ENCODE measurements at regions of chr17 and their contacts with region 1.

Region 1: GRCh38 chr17:40480501-40481003 is 20.9 kb downstream of the TNS4 start:
- DNase-seq: peak; percentile 71 to 96 (median 83)
- ATAC-seq: peak; percentile 87
- H3K4me3 ChIP-seq: no peak overlapping the region
- H3K4me3 Mint-ChIP-seq: peak overlapping the region; percentile 68
- H3K27ac ChIP-seq: peak overlapping the region; percentile 57 to 71
- H3K27ac Mint-ChIP-seq: peak overlapping the region; percentile 97
- H3K4me1 ChIP-seq: peaks cover 80% of the 10 kb centered on the region
- H3K4me1 Mint-ChIP-seq: peaks cover 67% of the 10 kb centered on the region
- H3K27me3 ChIP-seq: no peaks in the 10 kb centered on the region
- H3K27me3 Mint-ChIP-seq: no peaks in the 10 kb centered on the region
- CTCF ChIP-seq: no peak

Region 2: GRCh38 chr17:40279407-40279806 is 201.1 kb before region 1 on chr17:
- CTCF ChIA-PET with region 1: no interaction called
- POLR2A ChIA-PET with region 1: no interaction called
- intact Hi-C with region 1: no loop called
- DNase-seq: no peak
- ATAC-seq: no peak
- H3K4me3 ChIP-seq: no peak overlapping the region
- H3K4me3 Mint-ChIP-seq: no peak overlapping the region
- H3K27ac ChIP-seq: no peak overlapping the region
- H3K27ac Mint-ChIP-seq: no peak overlapping the region
- H3K4me1 ChIP-seq: peaks cover 10% of the 10 kb centered on the region
- H3K4me1 Mint-ChIP-seq: peaks cover 11% of the 10 kb centered on the region
- H3K27me3 ChIP-seq: no peaks in the 10 kb centered on the region
- H3K27me3 Mint-ChIP-seq: no peaks in the 10 kb centered on the region
- CTCF ChIP-seq: no peak

Region 3: DNA sequence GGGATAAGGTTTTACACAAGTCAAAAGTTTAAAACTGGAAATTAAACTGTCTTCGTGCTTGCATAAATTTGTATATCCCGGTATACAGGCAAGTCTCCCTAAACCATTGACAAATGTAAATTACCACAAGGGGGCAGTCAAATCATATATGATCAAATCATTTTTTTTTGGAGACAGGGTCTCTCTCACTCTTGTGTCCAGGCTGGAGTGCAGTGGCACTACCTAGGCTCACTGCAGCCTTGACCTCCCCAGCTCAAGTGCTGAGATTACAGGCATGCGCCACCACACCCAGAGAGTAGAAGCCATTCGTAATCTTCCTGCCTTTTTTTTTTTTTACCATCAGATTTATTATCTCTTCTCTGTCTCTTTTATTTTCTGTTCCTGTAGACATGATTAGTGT is 81.4 kb before region 1 on chr17:
- CTCF ChIA-PET with region 1: interaction called, 3 read pairs
- POLR2A ChIA-PET with region 1: no interaction called
- intact Hi-C with region 1: loop called in 1 of 2 experiments (anchors 5 kb)
- DNase-seq: peak in 5 of 14 experiments; percentile 7 to 80 (median 52)
- ATAC-seq: peak; percentile 71
- H3K4me3 ChIP-seq: no peak overlapping the region
- H3K4me3 Mint-ChIP-seq: no peak overlapping the region
- H3K27ac ChIP-seq: no peak overlapping the region
- H3K27ac Mint-ChIP-seq: no peak overlapping the region
- H3K4me1 ChIP-seq: peaks cover 3% of the 10 kb centered on the region
- H3K4me1 Mint-ChIP-seq: peaks cover 22% of the 10 kb centered on the region
- H3K27me3 ChIP-seq: no peaks in the 10 kb centered on the region
- H3K27me3 Mint-ChIP-seq: no peaks in the 10 kb centered on the region
- CTCF ChIP-seq: peak; percentile 91

Region 4: DNA sequence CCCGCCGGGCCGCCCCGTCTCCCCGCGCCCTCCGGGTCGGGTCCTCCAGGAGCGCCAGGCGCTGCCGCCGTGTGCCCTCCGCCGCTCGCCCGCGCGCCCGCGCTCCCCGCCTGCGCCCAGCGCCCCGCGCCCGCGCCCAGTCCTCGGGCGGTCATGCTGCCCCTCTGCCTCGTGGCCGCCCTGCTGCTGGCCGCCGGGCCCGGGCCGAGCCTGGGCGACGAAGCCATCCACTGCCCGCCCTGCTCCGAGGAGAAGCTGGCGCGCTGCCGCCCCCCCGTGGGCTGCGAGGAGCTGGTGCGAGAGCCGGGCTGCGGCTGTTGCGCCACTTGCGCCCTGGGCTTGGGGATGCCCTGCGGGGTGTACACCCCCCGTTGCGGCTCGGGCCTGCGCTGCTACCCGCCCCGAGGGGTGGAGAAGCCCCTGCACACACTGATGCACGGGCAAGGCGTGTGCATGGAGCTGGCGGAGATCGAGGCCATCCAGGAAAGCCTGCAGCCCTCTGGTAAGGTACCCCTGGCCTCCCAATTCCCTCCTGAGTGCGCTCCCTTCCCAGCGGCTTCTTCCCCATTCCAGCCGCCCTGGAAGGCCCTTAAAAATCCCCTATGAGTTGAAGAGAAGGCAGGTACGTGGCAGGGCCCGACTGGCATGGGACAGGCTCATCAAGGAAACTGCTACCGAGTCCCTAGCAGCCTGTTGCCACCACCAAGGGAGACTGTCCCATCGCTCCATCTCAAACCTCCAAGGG is 36.8 kb before region 1 on chr17:
- CTCF ChIA-PET with region 1: no interaction called
- POLR2A ChIA-PET with region 1: interaction called, 7 read pairs
- intact Hi-C with region 1: loop called in 1 of 2 experiments (anchors 5 kb)
- DNase-seq: peak; percentile 41 to 84 (median 66)
- ATAC-seq: peak; percentile 76
- H3K4me3 ChIP-seq: peak overlapping the region; percentile 62
- H3K4me3 Mint-ChIP-seq: peak overlapping the region; percentile 89
- H3K27ac ChIP-seq: no peak overlapping the region
- H3K27ac Mint-ChIP-seq: peak overlapping the region; percentile 85
- H3K4me1 ChIP-seq: peaks cover 46% of the 10 kb centered on the region
- H3K4me1 Mint-ChIP-seq: peaks cover 37% of the 10 kb centered on the region
- H3K27me3 ChIP-seq: no peaks in the 10 kb centered on the region
- H3K27me3 Mint-ChIP-seq: peaks cover 6% of the 10 kb centered on the region
- CTCF ChIP-seq: peak; percentile 63

Region 5: GRCh38 chr17:40454613-40454995 is 25.9 kb before region 1 on chr17:
- CTCF ChIA-PET with region 1: no interaction called
- POLR2A ChIA-PET with region 1: no interaction called
- intact Hi-C with region 1: no loop called
- DNase-seq: no peak
- ATAC-seq: no peak
- H3K4me3 ChIP-seq: no peak overlapping the region
- H3K4me3 Mint-ChIP-seq: no peak overlapping the region
- H3K27ac ChIP-seq: no peak overlapping the region
- H3K27ac Mint-ChIP-seq: no peak overlapping the region
- H3K4me1 ChIP-seq: no peaks in the 10 kb centered on the region
- H3K4me1 Mint-ChIP-seq: no peaks in the 10 kb centered on the region
- H3K27me3 ChIP-seq: no peaks in the 10 kb centered on the region
- H3K27me3 Mint-ChIP-seq: no peaks in the 10 kb centered on the region
- CTCF ChIP-seq: no peak

Region 6: GRCh38 chr17:40542558-40543411 is 62.2 kb after region 1 on chr17:
- CTCF ChIA-PET with region 1: interaction called, 3 read pairs
- POLR2A ChIA-PET with region 1: interaction called, 22 read pairs
- intact Hi-C with region 1: no loop called
- DNase-seq: peak in 5 of 14 experiments; percentile 32 to 80 (median 45)
- ATAC-seq: no peak
- H3K4me3 ChIP-seq: no peak overlapping the region
- H3K4me3 Mint-ChIP-seq: peak overlapping the region; percentile 72
- H3K27ac ChIP-seq: peak overlapping the region in 1 of 2 donors; percentile 79
- H3K27ac Mint-ChIP-seq: peak overlapping the region; percentile 94
- H3K4me1 ChIP-seq: peaks cover 94% of the 10 kb centered on the region
- H3K4me1 Mint-ChIP-seq: peaks cover 83% of the 10 kb centered on the region
- H3K27me3 ChIP-seq: no peaks in the 10 kb centered on the region
- H3K27me3 Mint-ChIP-seq: no peaks in the 10 kb centered on the region
- CTCF ChIP-seq: no peak

Region 7: GRCh38 chr17:40699371-40699770 is 218.8 kb after region 1 on chr17:
- CTCF ChIA-PET with region 1: no interaction called
- POLR2A ChIA-PET with region 1: no interaction called
- intact Hi-C with region 1: no loop called
- DNase-seq: no peak
- ATAC-seq: no peak
- H3K4me3 ChIP-seq: no peak overlapping the region
- H3K4me3 Mint-ChIP-seq: no peak overlapping the region
- H3K27ac ChIP-seq: no peak overlapping the region
- H3K27ac Mint-ChIP-seq: no peak overlapping the region
- H3K4me1 ChIP-seq: no peaks in the 10 kb centered on the region
- H3K4me1 Mint-ChIP-seq: no peaks in the 10 kb centered on the region
- H3K27me3 ChIP-seq: peaks cover 7 to 15% of the 10 kb centered on the region in 2 experiments
- H3K27me3 Mint-ChIP-seq: peaks cover 40% of the 10 kb centered on the region
- CTCF ChIP-seq: no peak

Region 8: GRCh38 chr17:40763752-40764151 is 283.2 kb after region 1 on chr17:
- CTCF ChIA-PET with region 1: no interaction called
- POLR2A ChIA-PET with region 1: no interaction called
- intact Hi-C with region 1: no loop called
- DNase-seq: no peak
- ATAC-seq: no peak
- H3K4me3 ChIP-seq: no peak overlapping the region
- H3K4me3 Mint-ChIP-seq: no peak overlapping the region
- H3K27ac ChIP-seq: no peak overlapping the region
- H3K27ac Mint-ChIP-seq: no peak overlapping the region
- H3K4me1 ChIP-seq: no peaks in the 10 kb centered on the region
- H3K4me1 Mint-ChIP-seq: no peaks in the 10 kb centered on the region
- H3K27me3 ChIP-seq: peaks cover 6 to 8% of the 10 kb centered on the region in 2 experiments
- H3K27me3 Mint-ChIP-seq: peaks cover 62% of the 10 kb centered on the region
- CTCF ChIP-seq: no peak

Measured in CD4-positive, alpha-beta T cell (primary cell).